ENCODE measurements at regions of chr1 and their contacts with region 1.

Region 1: GRCh38 chr1:16009030-16009709 is 5.1 kb downstream of the SRARP start:
- DNase-seq: peak; percentile 73
- H3K4me3 ChIP-seq: no peak overlapping the region
- H3K27ac ChIP-seq: no peak overlapping the region
- H3K4me1 ChIP-seq: peaks cover 4% of the 10 kb centered on the region
- H3K27me3 ChIP-seq: no peaks in the 10 kb centered on the region
- CTCF ChIP-seq: peak; percentile 95 to 97
- POLR2A ChIP-seq: no peak

Region 2: GRCh38 chr1:15663925-15664324 is 345.2 kb before region 1 on chr1:
- CTCF ChIA-PET with region 1: no interaction called
- POLR2A ChIA-PET with region 1: interaction called, 10 read pairs
- dilution Hi-C with region 1: no loop called
- intact Hi-C with region 1: no loop called
- DNase-seq: no peak
- H3K4me3 ChIP-seq: no peak overlapping the region
- H3K27ac ChIP-seq: no peak overlapping the region
- H3K4me1 ChIP-seq: peaks cover 8% of the 10 kb centered on the region
- H3K27me3 ChIP-seq: no peaks in the 10 kb centered on the region
- CTCF ChIP-seq: no peak
- POLR2A ChIP-seq: no peak

Region 3: DNA sequence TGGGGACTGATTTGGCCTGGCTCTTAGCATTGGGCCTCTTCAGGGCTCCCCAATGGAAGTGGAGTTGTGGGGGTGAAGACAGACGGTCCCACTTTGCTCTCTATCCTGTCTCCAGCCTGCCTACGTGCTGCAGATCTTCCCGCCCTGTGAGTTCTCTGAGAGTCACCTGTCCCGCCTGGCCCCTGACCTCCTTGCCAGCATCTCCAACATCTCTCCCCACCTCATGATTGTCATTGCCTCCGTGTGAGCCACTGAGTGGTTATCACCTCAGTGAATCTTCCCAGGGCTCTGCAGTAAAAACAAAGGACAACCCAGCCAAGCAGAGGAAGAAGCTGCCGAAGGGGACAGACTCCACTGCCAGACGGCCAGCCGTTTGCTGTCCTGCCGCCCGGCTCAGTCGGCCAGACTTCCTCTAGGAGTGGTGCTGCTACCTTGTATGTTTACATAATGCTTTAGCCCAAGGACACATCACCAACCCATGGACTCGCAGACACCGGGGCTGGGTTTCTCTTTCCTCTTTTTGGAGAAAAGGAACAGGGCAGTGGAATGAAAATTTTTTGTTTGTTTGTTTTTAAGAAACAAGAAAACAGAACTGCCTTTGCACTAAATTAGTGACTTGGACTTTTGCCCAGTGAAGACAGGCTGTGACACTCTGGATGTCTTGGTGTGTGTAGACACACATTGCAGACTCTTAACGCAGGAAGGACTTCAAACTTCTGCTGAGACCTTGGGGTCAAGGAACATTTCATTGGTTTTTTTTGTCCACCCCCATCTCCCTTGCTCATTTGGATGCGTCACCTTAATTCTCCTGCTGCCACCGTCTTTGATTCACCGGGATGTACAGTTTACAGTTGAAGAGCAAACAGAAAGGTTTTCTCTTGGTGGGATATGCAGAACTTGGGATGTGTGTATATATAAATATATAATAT is 69.7 kb before region 1 on chr1:
- CTCF ChIA-PET with region 1: no interaction called
- POLR2A ChIA-PET with region 1: no interaction called
- dilution Hi-C with region 1: no loop called
- intact Hi-C with region 1: no loop called
- DNase-seq: peak; percentile 49
- H3K4me3 ChIP-seq: no peak overlapping the region
- H3K27ac ChIP-seq: peak overlapping the region; percentile 27
- H3K4me1 ChIP-seq: peaks cover 26% of the 10 kb centered on the region
- H3K27me3 ChIP-seq: no peaks in the 10 kb centered on the region
- CTCF ChIP-seq: no peak
- POLR2A ChIP-seq: no peak

Region 4: GRCh38 chr1:15994590-15995351 is 14.4 kb before region 1 on chr1:
- CTCF ChIA-PET with region 1: interaction called, 10 read pairs
- POLR2A ChIA-PET with region 1: no interaction called
- dilution Hi-C with region 1: no loop called
- intact Hi-C with region 1: no loop called
- DNase-seq: peak; percentile 71
- H3K4me3 ChIP-seq: no peak overlapping the region
- H3K27ac ChIP-seq: no peak overlapping the region
- H3K4me1 ChIP-seq: no peaks in the 10 kb centered on the region
- H3K27me3 ChIP-seq: peaks cover 0 to 2% of the 10 kb centered on the region in 2 experiments
- CTCF ChIP-seq: peak; percentile 88 to 96
- POLR2A ChIP-seq: no peak

Region 5: GRCh38 chr1:16032388-16033103 is 23.4 kb after region 1 on chr1:
- CTCF ChIA-PET with region 1: interaction called, 25 read pairs
- POLR2A ChIA-PET with region 1: no interaction called
- dilution Hi-C with region 1: no loop called
- intact Hi-C with region 1: loop called (anchors 1 kb)
- DNase-seq: peak; percentile 88
- H3K4me3 ChIP-seq: no peak overlapping the region
- H3K27ac ChIP-seq: no peak overlapping the region
- H3K4me1 ChIP-seq: no peaks in the 10 kb centered on the region
- H3K27me3 ChIP-seq: no peaks in the 10 kb centered on the region
- CTCF ChIP-seq: peak; percentile 86 to 94
- POLR2A ChIP-seq: no peak

Region 6: DNA sequence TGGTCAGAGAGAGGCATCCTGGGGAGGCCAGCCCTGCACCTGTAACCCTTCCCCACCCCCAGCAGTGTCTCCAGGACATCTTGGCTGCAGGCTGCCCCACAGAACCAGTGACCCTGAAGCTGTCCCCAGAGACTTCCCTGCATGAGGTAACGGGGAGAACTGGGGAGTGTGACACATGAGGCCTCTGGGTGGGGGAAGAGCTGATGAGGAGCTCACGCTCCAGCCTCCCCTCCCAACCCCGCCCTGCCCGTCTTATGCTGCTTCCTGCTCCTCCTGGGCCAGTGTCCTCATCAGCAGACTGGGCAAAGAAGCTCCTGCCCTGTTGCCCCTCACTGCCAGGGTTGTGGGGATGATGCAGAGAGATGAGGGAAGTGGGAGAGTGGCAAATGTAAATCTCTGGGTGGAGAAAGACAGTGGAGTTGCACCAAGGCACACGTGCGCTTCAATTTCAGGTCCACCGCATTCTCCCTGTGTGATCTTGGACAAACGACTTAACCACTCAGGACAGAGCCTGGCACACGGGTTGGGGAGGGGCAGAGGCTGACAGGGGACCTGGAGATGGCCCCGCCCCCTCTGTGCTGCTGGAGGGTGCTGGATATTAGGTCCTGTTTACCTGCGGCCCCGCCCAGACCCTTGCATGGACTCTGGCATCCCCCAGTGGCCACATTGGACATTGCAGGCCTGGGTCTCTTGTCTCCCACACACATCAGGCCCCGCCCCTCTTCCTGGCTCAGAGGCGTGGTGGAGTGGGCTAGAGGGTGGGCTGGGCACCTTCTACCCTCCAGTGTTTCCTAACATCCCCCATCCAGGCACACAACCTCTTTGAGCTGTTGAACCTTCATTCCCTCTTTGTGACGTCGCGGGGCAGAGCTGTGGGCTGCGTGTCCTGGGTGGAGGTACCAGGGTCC is 46.7 kb after region 1 on chr1:
- CTCF ChIA-PET with region 1: interaction called, 19 read pairs
- POLR2A ChIA-PET with region 1: no interaction called
- dilution Hi-C with region 1: no loop called
- intact Hi-C with region 1: loop called (anchors 1 kb)
- DNase-seq: peak; percentile 78
- H3K4me3 ChIP-seq: no peak overlapping the region
- H3K27ac ChIP-seq: no peak overlapping the region
- H3K4me1 ChIP-seq: no peaks in the 10 kb centered on the region
- H3K27me3 ChIP-seq: peaks cover 0 to 4% of the 10 kb centered on the region in 2 experiments
- CTCF ChIP-seq: peak; percentile 77 to 95
- POLR2A ChIP-seq: no peak

Region 7: GRCh38 chr1:16073490-16074119 is 64.4 kb after region 1 on chr1 and contains the start of gene FAM131C:
- CTCF ChIA-PET with region 1: interaction called, 12 read pairs
- POLR2A ChIA-PET with region 1: no interaction called
- dilution Hi-C with region 1: no loop called
- intact Hi-C with region 1: loop called (anchors 1 kb)
- DNase-seq: no peak
- H3K4me3 ChIP-seq: peak within 1 kb of the TSS; percentile 23 to 37 (median 25)
- H3K27ac ChIP-seq: no peak within 1 kb of the TSS
- H3K4me1 ChIP-seq: peaks cover 13% of the 10 kb centered on the region
- H3K27me3 ChIP-seq: no peaks in the 10 kb centered on the region
- CTCF ChIP-seq: peak; percentile 8 to 51
- POLR2A ChIP-seq: no peak
- total RNA-seq, gene FAM131C: 0.44 TPM in 1 of 2 replicates, not detected in the other

Region 8: DNA sequence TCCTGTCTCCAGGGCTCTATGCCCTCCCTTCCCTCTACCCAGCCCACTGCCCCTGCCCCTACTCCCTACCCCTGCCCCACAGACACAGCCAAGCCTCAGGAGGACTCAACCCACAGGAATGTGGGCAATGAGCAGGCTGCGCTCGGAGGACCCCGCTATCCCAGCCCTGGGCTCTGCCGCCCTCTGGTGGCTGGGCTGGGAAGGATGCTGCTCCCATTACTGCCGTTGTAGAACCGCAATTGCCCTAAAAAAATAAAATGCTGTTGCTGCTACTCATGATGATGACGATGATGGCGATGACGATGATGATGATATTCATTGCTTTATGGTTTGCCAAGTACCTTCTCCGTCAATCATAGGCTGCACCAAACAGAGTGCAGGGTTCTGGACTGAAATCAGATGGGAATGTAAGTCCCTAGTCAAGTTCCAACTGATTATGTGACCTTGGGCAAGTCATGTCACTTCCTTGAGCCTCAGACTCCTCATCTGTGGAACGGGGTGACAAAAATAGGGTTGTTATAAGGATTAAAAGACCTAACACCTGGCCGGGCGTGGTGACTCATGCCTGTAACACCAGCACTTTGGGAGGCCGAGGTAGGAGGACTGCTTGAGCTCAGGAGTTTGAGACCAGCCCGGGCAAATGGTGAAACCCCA is 178.7 kb after region 1 on chr1:
- CTCF ChIA-PET with region 1: no interaction called
- POLR2A ChIA-PET with region 1: no interaction called
- dilution Hi-C with region 1: no loop called
- intact Hi-C with region 1: loop called (anchors 1 kb)
- DNase-seq: peak; percentile 85
- H3K4me3 ChIP-seq: no peak overlapping the region
- H3K27ac ChIP-seq: no peak overlapping the region
- H3K4me1 ChIP-seq: peaks cover 5% of the 10 kb centered on the region
- H3K27me3 ChIP-seq: no peaks in the 10 kb centered on the region
- CTCF ChIP-seq: peak; percentile 93 to 95
- POLR2A ChIP-seq: no peak

Measured in endothelial cell of umbilical vein (primary cell).